AG04449 (cell line): ENCODE measurements at regions of chr10 and their contacts with region 1.

Region 1: GRCh38 chr10:33330543-33331378 is 3.7 kb downstream of the NRP1 start:
- DNase-seq: no peak
- H3K4me3 ChIP-seq: peak overlapping the region; percentile 86
- CTCF ChIP-seq: peak; percentile 81

Region 2: GRCh38 chr10:33314811-33315561 is 15.8 kb before region 1 on chr10:
- CTCF ChIA-PET with region 1: interaction called, 20 read pairs
- POLR2A ChIA-PET with region 1: no interaction called
- DNase-seq: no peak
- H3K4me3 ChIP-seq: no peak overlapping the region
- CTCF ChIP-seq: no peak

Region 3: DNA sequence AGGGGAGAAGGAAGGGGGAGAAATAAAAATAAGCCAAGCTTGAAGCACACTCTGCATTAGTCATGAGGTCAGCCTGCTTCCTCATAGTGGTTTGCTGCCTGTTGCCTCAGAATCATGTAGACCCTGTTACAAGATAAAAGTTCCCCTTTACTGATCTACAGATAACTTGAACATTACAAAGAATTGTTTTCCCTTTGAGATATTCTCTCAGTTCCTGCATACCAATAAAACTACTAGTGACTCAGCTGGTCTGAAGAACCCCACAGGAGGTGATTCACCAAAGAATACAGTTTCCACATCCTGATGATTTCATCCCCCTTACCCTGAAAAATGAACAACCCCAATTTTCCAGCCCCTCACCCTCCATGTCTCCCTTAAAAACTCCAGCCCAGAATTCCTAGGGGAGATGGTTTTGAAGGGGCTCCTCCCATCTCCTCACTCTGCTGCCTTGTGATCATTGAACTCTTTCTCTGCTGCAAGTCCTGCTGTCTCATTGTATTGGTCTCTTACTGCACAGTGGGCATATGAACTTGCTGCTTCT is 35.2 kb after region 1 on chr10:
- CTCF ChIA-PET with region 1: no interaction called
- POLR2A ChIA-PET with region 1: interaction called, 10 read pairs
- DNase-seq: peak; percentile 87
- H3K4me3 ChIP-seq: no peak overlapping the region
- CTCF ChIP-seq: no peak

Region 4: GRCh38 chr10:33832124-33832787 is 501.5 kb after region 1 on chr10:
- CTCF ChIA-PET with region 1: no interaction called
- POLR2A ChIA-PET with region 1: no interaction called
- DNase-seq: no peak
- H3K4me3 ChIP-seq: no peak overlapping the region
- CTCF ChIP-seq: no peak